Right cardiac atrium (tissue), 5 donors: ENCODE measurements at regions of chr3 and their contacts with region 1.

Region 1: DNA sequence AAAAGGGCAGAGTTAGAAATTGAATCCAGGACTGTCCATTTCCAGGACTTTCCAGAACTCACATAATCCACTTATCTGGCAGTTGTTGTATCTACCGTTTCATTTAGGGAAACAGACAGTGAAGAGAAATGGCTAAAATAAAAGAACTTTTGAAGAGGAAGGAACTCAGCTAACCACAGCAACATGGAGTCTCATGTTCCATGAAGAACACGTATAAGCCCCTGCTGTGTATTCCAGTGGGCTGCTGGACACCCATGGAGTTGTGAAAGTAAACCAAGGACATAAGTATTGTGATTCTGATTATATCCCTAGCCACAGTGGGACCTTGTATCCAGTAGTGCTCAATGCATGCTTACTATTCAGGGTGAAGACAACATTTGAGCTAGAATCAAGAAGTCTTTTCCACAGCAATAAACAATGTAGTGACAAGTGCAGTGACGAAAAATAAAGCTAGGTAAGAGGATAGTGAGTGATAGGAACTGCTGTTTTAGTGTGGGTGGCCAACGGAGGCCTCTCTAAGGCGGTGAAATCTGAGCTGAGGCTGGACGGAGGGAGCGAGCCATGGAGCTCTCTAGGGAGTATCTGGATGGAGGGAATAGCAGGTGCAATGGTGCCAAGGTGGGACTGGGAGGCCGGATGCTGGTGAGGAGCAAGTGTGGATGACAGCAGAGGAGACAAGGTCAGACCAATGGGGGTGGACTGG is 26.8 kb upstream of the TRH start:
- DNase-seq: no peak
- ATAC-seq: no peak
- H3K4me3 ChIP-seq: no peak overlapping the region
- H3K27ac ChIP-seq: no peak overlapping the region
- H3K4me1 ChIP-seq: no peaks in the 10 kb centered on the region
- H3K27me3 ChIP-seq: no peaks in the 10 kb centered on the region

Region 2: GRCh38 chr3:129994883-129995559 is 47.3 kb after region 1 on chr3:
- intact Hi-C with region 1: loop called in 2 of 4 experiments (anchors 5 kb)
- DNase-seq: no peak
- ATAC-seq: no peak
- H3K4me3 ChIP-seq: no peak overlapping the region
- H3K27ac ChIP-seq: no peak overlapping the region
- H3K4me1 ChIP-seq: no peaks in the 10 kb centered on the region
- H3K27me3 ChIP-seq: no peaks in the 10 kb centered on the region

Region 3: DNA sequence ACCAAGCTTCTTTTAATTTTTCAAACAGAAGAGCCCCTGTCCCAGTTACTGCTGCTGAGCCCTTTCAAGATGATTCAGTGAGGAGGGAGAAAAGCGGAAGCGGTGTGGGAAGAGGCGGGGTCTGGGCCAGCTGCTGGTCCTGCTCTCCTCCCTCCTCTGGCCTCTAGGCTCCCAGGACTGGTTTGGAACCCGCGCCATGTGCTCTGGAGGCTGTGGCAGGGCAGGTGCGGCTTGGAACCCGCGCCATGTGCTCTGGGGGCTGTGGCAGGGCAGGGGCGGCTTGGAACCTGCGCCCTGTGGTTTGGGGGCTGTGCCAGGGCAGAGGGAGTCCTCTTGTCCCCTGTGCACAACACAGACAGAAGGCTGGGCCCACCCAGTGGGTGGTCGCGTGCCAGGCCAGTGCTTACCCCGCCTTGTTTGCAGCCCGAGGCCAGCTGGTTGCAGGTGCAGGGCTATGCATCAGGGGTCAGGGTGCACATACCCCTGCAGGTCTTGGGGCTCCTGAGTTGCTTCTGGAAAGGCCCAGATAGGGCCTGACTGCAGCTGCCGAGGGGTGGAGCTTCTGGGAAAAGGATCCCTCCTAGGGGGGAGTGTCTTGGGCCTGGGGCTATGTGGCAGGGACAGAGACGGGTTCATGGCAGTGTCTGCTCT is 146.2 kb after region 1 on chr3:
- intact Hi-C with region 1: loop called in 2 of 4 experiments (anchors 5 to 10 kb)
- DNase-seq: peak in 1 of 3 donors; percentile 55
- ATAC-seq: no peak
- H3K4me3 ChIP-seq: no peak overlapping the region
- H3K27ac ChIP-seq: no peak overlapping the region
- H3K4me1 ChIP-seq: no peaks in the 10 kb centered on the region
- H3K27me3 ChIP-seq: no peaks in the 10 kb centered on the region